Activated naive CD4-positive, alpha-beta T cell treated with anti-CD3 and anti-CD28 coated beads, Interleukin-2, amount 10 ng/mL, durations not matched to agents 7 days and 5 days (primary cell): ENCODE measurements at regions of chr3 and their contacts with region 1.

Region 1: GRCh38 chr3:194682694-194683310 is 2.9 kb upstream of the FAM43A start:
- DNase-seq: peak; percentile 76
- H3K4me3 Mint-ChIP-seq: no peak overlapping the region
- H3K27ac Mint-ChIP-seq: no peak overlapping the region
- H3K4me1 Mint-ChIP-seq: peaks cover 42% of the 10 kb centered on the region
- H3K27me3 Mint-ChIP-seq: peaks cover 65% of the 10 kb centered on the region

Region 2: DNA sequence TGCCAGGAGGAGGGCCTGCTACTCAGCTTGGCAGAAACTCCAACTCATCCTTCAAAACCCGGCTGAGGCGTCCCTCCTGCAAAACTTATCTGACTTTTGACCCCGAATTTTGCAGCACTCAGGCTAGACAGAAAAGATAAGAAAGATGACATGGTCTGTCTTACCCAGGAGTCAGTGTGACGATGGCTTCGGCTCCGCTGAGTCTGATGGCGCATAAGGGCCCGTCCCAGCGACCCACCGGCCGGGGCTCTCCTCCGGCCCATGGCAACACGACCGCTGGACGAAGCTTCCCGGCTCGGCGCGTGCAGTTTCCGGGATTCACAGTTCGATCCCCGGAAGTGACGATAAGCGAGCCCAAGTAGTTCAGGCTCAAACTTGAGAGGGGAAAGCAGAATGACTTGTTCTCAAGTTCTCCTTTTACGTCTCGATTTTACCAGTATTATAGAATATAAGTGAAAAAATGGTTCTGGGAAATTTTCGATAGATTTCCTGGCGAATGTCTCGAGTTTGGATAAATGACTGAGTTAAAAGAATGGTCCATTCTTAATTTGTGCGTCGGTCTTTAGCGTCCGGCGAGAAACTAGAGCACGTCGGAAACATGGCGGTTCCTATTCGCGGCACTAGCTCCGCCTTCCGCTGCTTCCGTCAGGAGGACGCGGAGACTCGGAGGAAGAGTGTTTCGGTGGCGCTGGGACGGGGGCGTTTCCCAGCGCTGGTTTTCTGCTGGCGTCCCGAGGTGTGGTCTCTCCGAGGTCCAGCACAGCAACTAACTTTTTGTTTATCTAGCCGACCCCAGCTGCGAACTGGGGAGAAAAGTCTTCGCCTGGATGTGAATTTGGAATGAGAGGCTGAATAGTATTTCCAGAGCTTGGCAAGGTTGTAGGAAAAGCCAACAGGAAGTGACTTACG is 10.6 kb before region 1 on chr3 and contains the start of gene LSG1:
- CTCF ChIA-PET with region 1: interaction called, 58 read pairs
- DNase-seq: peak; percentile 92
- H3K4me3 Mint-ChIP-seq: peak within 1 kb of the TSS; percentile 98
- H3K27ac Mint-ChIP-seq: peak within 1 kb of the TSS; percentile 97
- H3K4me1 Mint-ChIP-seq: peaks cover 35% of the 10 kb centered on the region
- H3K27me3 Mint-ChIP-seq: peaks cover 27% of the 10 kb centered on the region

Region 3: DNA sequence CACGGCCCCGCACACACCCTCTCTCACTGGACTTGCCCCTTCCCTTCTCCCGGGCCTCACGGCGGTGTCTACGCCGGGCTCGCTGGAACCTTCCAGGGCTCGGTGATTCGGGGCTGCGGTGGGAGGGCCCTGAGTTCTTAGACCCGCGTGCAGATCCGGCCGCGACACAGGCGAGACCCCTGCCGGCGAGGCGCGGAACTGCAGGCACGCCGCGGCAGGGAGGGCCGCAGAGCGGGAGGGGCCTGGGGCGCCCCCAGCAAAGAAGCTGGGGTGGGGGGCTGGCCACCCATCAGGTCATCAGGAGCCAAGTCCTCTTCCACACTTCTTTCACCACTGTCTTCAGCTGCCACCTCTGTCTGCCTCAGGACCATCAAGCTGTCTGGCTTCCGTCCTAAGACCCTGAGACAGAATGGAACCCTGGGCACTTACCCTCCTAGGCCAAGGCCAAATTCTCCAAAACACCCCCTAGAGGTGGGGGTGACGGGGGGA is 423.7 kb after region 1 on chr3:
- CTCF ChIA-PET with region 1: interaction called, 57 read pairs
- DNase-seq: peak; percentile 71
- H3K4me3 Mint-ChIP-seq: no peak overlapping the region
- H3K27ac Mint-ChIP-seq: no peak overlapping the region
- H3K4me1 Mint-ChIP-seq: peaks cover 11% of the 10 kb centered on the region
- H3K27me3 Mint-ChIP-seq: peaks cover 5% of the 10 kb centered on the region

Region 4: DNA sequence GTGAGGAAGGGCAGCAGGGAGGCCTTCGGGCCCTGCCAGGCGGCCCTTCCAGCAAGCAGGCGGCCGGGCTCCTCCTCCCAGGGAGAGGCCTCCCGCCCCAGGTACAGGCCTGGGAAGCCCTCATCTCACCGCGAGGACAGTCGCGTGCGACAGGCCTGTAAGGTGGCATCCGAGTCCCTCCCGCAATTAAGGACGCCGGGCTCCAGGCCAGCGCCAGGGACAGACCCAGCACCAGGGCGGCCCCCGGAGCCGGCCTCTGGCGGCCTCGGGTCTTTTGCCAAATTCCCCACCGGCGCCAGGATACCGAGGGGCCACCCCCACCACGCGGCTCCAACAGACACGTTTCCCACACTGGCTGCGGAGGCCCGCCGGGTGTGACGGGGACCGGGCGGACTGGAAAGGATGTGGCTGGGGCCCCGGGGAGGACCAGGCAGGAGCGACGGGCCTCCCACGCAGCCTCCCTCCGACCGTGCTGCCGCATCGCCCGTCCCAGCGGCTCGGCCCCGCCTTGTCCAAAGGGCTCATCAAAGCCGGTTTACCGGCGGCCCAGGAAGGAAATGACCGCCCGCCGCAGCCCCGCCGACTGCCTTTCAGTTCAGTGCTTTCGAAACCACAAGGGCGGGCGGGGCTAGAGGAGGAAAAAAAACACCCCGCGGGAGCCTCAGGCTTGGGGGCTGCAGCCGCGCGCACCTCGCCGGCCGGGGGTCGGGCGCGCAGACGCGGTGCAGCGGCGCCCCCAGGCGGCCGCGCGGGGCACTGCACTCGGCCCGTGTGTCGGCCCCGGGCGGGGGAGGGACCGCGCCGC is 576.9 kb after region 1 on chr3:
- CTCF ChIA-PET with region 1: interaction called, 32 read pairs
- DNase-seq: peak; percentile 90
- H3K4me3 Mint-ChIP-seq: no peak overlapping the region
- H3K27ac Mint-ChIP-seq: peak overlapping the region; percentile 45
- H3K4me1 Mint-ChIP-seq: peaks cover 35% of the 10 kb centered on the region
- H3K27me3 Mint-ChIP-seq: peaks cover 4% of the 10 kb centered on the region